ENCODE measurements at regions of chr13 and their contacts with region 1.

Region 1: GRCh38 chr13:52194184-52194868 is 34.9 kb upstream of the NEK3 start:
- DNase-seq: peak; percentile 29 to 91
- H3K4me3 ChIP-seq: peak overlapping the region; percentile 66 to 86
- H3K27ac ChIP-seq: peak overlapping the region; percentile 72 to 80
- H3K4me1 ChIP-seq: peaks cover 0 to 2% of the 10 kb centered on the region in 2 donors
- H3K27me3 ChIP-seq: no peaks in the 10 kb centered on the region
- CTCF ChIP-seq: no peak

Region 2: DNA sequence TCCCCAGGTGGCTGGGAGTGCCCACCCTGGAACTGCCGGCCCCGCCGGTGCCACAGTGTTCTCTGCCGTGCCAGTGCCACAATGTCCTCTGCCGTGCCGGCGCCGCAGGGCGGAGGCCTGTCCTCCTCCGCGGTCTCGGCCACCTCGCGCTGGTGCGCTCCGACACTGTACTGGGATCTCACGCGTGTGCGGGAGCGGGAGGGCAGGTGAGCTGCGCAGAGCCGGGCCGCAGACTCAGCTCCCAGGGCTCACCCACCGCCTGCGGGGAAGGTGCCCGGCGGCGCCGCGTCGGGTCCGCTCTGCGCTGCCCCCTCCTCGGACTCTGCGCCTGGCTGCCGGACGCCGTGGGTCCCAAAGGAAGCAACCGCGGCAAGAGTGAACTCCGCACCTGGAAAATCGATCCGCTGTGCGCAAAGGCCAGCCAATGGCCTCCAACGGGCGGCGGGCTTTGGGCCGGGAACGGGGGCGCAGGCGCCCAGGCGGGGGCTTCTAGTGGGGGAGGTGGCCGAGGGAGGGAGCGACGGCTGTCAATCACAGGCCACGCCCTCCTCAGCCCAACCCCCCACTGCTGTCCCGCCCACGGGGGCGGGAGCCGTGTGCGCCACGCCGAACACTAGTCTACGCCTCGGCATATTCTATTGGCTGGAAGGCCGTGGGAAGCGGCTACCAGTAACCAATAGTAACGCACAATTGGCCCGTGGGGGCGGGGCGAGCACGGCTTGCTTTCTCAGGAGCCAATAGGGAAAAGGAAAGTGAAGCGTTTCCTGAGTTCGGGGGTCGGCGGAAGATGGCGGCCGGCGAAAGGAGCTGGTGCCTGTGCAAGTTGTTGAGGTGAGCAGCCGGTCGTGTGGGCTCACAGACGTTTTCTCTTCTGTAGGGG is 182.5 kb before region 1 on chr13 and contains the start of gene ALG11:
- intact Hi-C with region 1: loop called (anchors 5 kb)
- DNase-seq: peak; percentile 97 to 100
- H3K4me3 ChIP-seq: peak within 1 kb of the TSS; percentile 73 to 75
- H3K27ac ChIP-seq: peak within 1 kb of the TSS; percentile 65 to 70
- H3K4me1 ChIP-seq: peaks cover 0 to 9% of the 10 kb centered on the region in 2 donors
- H3K27me3 ChIP-seq: no peaks in the 10 kb centered on the region
- CTCF ChIP-seq: no peak
- total RNA-seq, gene ALG11: 13.6 TPM